ENCODE measurements at regions of chr7 and their contacts with region 1.

Region 1: DNA sequence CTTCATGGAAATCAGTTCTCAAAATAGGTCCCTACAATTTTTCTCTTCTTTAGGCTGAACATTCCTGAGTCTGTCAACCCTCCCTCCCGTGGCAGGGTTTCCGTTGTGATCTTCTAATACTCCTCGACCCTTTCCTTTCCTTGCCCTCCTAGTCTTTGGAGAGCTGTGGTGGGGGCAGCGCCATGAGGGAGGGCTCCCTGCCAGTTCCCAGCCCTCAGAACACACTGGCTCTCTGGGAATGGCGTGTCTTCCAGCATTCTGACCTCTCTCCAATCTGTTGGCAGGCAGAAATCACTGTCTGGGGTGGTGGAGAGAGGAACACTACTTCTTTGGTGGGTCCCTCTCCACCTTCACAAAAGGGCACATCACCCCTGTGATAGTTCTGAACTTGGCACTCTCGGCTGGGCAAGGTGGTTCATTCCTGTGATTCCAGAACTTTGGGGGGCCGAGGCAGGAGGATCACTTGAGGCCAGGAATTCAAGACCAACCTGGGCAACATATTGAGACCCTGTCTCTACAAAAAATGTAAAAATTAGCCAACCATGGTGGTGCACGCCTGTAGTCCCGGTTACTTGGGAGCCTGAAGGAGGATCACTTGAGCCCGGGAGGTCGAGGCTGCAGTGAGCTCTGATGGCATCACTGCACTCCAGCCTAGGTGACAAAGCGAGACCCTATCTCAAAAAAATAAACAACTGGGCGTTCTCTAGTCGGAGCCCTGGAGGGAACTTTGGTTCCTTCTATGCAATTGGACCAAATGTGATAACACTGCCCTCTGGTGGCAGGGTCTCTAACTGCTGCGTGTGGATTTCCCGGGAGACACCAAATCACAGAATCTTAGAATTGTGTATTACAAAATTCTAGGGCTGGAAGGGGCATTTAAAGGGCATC is 13.1 kb upstream of the ARPC1A start:
- DNase-seq: peak; percentile 79 to 85 (median 80)
- ATAC-seq: peak; percentile 89
- H3K4me3 ChIP-seq: no peak overlapping the region
- H3K27ac ChIP-seq: no peak overlapping the region
- H3K4me1 ChIP-seq: no peaks in the 10 kb centered on the region; a peak in 1 of 5 replicates
- H3K27me3 ChIP-seq: peaks cover 22 to 31% of the 10 kb centered on the region in 2 experiments
- CTCF ChIP-seq: peak; percentile 92 to 96 (median 92)
- EP300 ChIP-seq: no peak
- POLR2A ChIP-seq: no peak
- RAD21 ChIP-seq: peak; percentile 91 to 92

Region 2: GRCh38 chr7:99270683-99271082 is 41.9 kb before region 1 on chr7:
- CTCF ChIA-PET with region 1: interaction called, 5 read pairs
- POLR2A ChIA-PET with region 1: interaction called, 4 read pairs
- in situ Hi-C with region 1: no loop called
- intact Hi-C with region 1: loop called (anchors 1 kb)
- DNase-seq: peak in 1 of 4 experiments; percentile 43
- ATAC-seq: peak; percentile 9; the same call in 2 of the 3 replicates
- H3K4me3 ChIP-seq: no peak overlapping the region
- H3K27ac ChIP-seq: no peak overlapping the region
- H3K4me1 ChIP-seq: peaks cover 4 to 8% of the 10 kb centered on the region in 2 experiments; a peak in 3 of 5 replicates
- H3K27me3 ChIP-seq: peaks cover 27 to 69% of the 10 kb centered on the region in 2 experiments; a peak in 4 of 5 replicates
- CTCF ChIP-seq: peak; percentile 25 to 56 (median 45); a peak in 3 of 6 replicates
- EP300 ChIP-seq: no peak
- POLR2A ChIP-seq: no peak
- RAD21 ChIP-seq: peak; percentile 16 to 41; a peak in 2 of 4 replicates

Region 3: GRCh38 chr7:99340659-99341058 is 28.1 kb after region 1 on chr7:
- CTCF ChIA-PET with region 1: no interaction called
- POLR2A ChIA-PET with region 1: no interaction called
- in situ Hi-C with region 1: no loop called
- intact Hi-C with region 1: no loop called
- DNase-seq: no peak
- ATAC-seq: no peak
- H3K4me3 ChIP-seq: no peak overlapping the region
- H3K27ac ChIP-seq: no peak overlapping the region
- H3K4me1 ChIP-seq: no peaks in the 10 kb centered on the region
- H3K27me3 ChIP-seq: no peaks in the 10 kb centered on the region
- CTCF ChIP-seq: no peak
- EP300 ChIP-seq: no peak
- POLR2A ChIP-seq: no peak
- RAD21 ChIP-seq: no peak